ENCODE measurements at regions of chr2 and their contacts with region 1.

Region 1: GRCh38 chr2:197191177-197191939 is 119.2 kb downstream of the ANKRD44 start:
- DNase-seq: peak in 3 of 14 experiments; percentile 83 to 84 (median 84)
- ATAC-seq: peak; percentile 59
- H3K4me3 ChIP-seq: no peak overlapping the region
- H3K4me3 Mint-ChIP-seq: peak overlapping the region; percentile 52
- H3K27ac ChIP-seq: peak overlapping the region; percentile 62 to 64
- H3K27ac Mint-ChIP-seq: peak overlapping the region; percentile 95
- H3K4me1 ChIP-seq: peaks cover 48% of the 10 kb centered on the region
- H3K4me1 Mint-ChIP-seq: peaks cover 82% of the 10 kb centered on the region
- H3K27me3 ChIP-seq: no peaks in the 10 kb centered on the region
- H3K27me3 Mint-ChIP-seq: no peaks in the 10 kb centered on the region
- CTCF ChIP-seq: peak; percentile 84

Region 2: DNA sequence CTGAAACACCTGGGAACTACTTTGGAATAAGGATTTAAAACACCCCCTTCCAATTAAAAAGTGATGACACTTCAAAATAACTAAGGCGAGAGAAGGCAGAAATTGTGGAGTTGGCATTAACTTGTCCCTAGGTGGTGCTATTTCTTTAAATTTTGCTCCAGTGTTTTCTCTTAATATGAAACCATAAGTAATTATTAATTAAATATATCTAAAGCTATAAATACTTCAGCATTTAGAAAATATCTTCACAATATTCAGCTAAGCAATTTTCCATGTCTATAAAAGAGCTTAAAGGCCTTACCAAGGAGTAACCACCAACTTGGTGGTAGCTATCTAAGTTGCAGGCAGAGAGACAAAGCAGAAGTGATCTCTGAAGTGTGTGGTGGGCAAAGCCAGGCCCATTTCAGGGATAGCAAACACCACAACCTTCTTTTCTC is 78.1 kb before region 1 on chr2:
- CTCF ChIA-PET with region 1: interaction called, 19 read pairs
- POLR2A ChIA-PET with region 1: interaction called, 4 read pairs
- intact Hi-C with region 1: loop called (anchors 2 to 5 kb)
- DNase-seq: peak in 3 of 14 experiments; percentile 56 to 70 (median 69)
- ATAC-seq: peak; percentile 60
- H3K4me3 ChIP-seq: no peak overlapping the region
- H3K4me3 Mint-ChIP-seq: no peak overlapping the region
- H3K27ac ChIP-seq: peak overlapping the region in 1 of 2 donors; percentile 38
- H3K27ac Mint-ChIP-seq: peak overlapping the region; percentile 83
- H3K4me1 ChIP-seq: peaks cover 1% of the 10 kb centered on the region
- H3K4me1 Mint-ChIP-seq: peaks cover 36% of the 10 kb centered on the region
- H3K27me3 ChIP-seq: no peaks in the 10 kb centered on the region
- H3K27me3 Mint-ChIP-seq: no peaks in the 10 kb centered on the region
- CTCF ChIP-seq: peak; percentile 81

Region 3: DNA sequence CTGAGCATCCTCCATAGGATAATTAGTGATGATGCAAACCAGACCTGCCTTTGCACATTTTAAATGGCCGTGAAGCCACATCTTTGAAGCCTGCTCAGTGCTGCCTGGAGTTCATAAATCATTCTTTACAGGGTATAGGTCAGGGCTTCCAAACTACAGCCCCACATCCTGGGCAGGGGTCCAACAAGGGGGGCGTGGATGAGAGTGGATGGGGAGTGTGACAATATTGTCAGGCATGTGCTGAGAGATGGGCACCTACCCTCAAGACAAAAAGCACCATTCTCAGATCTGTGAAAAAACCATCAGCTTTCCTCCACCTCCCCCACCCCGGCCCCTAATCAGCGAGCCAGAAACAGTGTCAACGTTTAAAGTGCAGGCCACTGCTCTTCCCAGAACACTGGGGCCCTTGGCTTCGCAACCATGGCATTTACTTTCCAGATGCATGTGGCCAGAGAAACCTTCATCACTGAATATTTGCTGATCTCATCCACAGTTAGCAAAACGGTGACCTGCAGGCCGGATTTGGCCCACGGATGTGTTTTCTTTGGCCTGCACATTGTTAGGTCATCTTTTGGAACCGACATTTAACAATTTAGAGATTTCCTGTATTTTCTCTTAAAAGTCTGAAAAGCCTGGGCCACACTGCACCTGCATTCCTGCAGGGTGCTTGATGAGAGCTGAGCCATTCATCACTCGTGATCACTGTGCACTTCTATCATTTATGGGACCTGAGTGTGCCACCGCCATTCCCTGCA is 11.4 kb before region 1 on chr2:
- CTCF ChIA-PET with region 1: interaction called, 20 read pairs
- POLR2A ChIA-PET with region 1: interaction called, 3 read pairs
- intact Hi-C with region 1: no loop called
- DNase-seq: no peak
- ATAC-seq: no peak
- H3K4me3 ChIP-seq: no peak overlapping the region
- H3K4me3 Mint-ChIP-seq: no peak overlapping the region
- H3K27ac ChIP-seq: no peak overlapping the region
- H3K27ac Mint-ChIP-seq: peak overlapping the region; percentile 46
- H3K4me1 ChIP-seq: peaks cover 12% of the 10 kb centered on the region
- H3K4me1 Mint-ChIP-seq: peaks cover 78% of the 10 kb centered on the region
- H3K27me3 ChIP-seq: no peaks in the 10 kb centered on the region
- H3K27me3 Mint-ChIP-seq: no peaks in the 10 kb centered on the region
- CTCF ChIP-seq: no peak

Region 4: GRCh38 chr2:197209742-197210408 is 18.5 kb after region 1 on chr2:
- CTCF ChIA-PET with region 1: interaction called, 24 read pairs
- POLR2A ChIA-PET with region 1: interaction called, 216 read pairs
- intact Hi-C with region 1: no loop called
- DNase-seq: peak in 7 of 14 experiments; percentile 25 to 79 (median 45)
- ATAC-seq: peak; percentile 8
- H3K4me3 ChIP-seq: peak overlapping the region; percentile 15
- H3K4me3 Mint-ChIP-seq: peak overlapping the region; percentile 73
- H3K27ac ChIP-seq: peak overlapping the region; percentile 79 to 86
- H3K27ac Mint-ChIP-seq: peak overlapping the region; percentile 98
- H3K4me1 ChIP-seq: peaks cover 86% of the 10 kb centered on the region
- H3K4me1 Mint-ChIP-seq: peaks cover 98% of the 10 kb centered on the region
- H3K27me3 ChIP-seq: no peaks in the 10 kb centered on the region
- H3K27me3 Mint-ChIP-seq: no peaks in the 10 kb centered on the region
- CTCF ChIP-seq: no peak

Region 5: GRCh38 chr2:197304556-197305011 is 113.2 kb after region 1 on chr2:
- CTCF ChIA-PET with region 1: interaction called, 69 read pairs
- POLR2A ChIA-PET with region 1: interaction called, 754 read pairs
- intact Hi-C with region 1: no loop called
- DNase-seq: peak in 2 of 14 experiments; percentile 41 to 49
- ATAC-seq: peak; percentile 28
- H3K4me3 ChIP-seq: peak overlapping the region; percentile 94
- H3K4me3 Mint-ChIP-seq: peak overlapping the region; percentile 95
- H3K27ac ChIP-seq: peak overlapping the region; percentile 67 to 96
- H3K27ac Mint-ChIP-seq: peak overlapping the region; percentile 95
- H3K4me1 ChIP-seq: peaks cover 70% of the 10 kb centered on the region
- H3K4me1 Mint-ChIP-seq: peaks cover 89% of the 10 kb centered on the region
- H3K27me3 ChIP-seq: no peaks in the 10 kb centered on the region
- H3K27me3 Mint-ChIP-seq: no peaks in the 10 kb centered on the region
- CTCF ChIP-seq: no peak

Region 6: GRCh38 chr2:197356136-197356535 is 164.8 kb after region 1 on chr2:
- CTCF ChIA-PET with region 1: no interaction called
- POLR2A ChIA-PET with region 1: interaction called, 4 read pairs
- intact Hi-C with region 1: loop called in 1 of 2 experiments (anchors 5 kb)
- DNase-seq: peak in 3 of 14 experiments; percentile 25 to 54 (median 47)
- ATAC-seq: peak; percentile 78
- H3K4me3 ChIP-seq: no peak overlapping the region
- H3K4me3 Mint-ChIP-seq: no peak overlapping the region
- H3K27ac ChIP-seq: no peak overlapping the region
- H3K27ac Mint-ChIP-seq: no peak overlapping the region
- H3K4me1 ChIP-seq: no peaks in the 10 kb centered on the region
- H3K4me1 Mint-ChIP-seq: peaks cover 27% of the 10 kb centered on the region
- H3K27me3 ChIP-seq: no peaks in the 10 kb centered on the region
- H3K27me3 Mint-ChIP-seq: no peaks in the 10 kb centered on the region
- CTCF ChIP-seq: peak; percentile 56

Region 7: GRCh38 chr2:197378494-197379307 is 187.3 kb after region 1 on chr2:
- CTCF ChIA-PET with region 1: interaction called, 9 read pairs
- POLR2A ChIA-PET with region 1: interaction called, 3 read pairs
- intact Hi-C with region 1: loop called (anchors 1 to 2 kb)
- DNase-seq: peak; percentile 39 to 80 (median 58)
- ATAC-seq: peak; percentile 71
- H3K4me3 ChIP-seq: no peak overlapping the region
- H3K4me3 Mint-ChIP-seq: no peak overlapping the region
- H3K27ac ChIP-seq: no peak overlapping the region
- H3K27ac Mint-ChIP-seq: no peak overlapping the region
- H3K4me1 ChIP-seq: peaks cover 7% of the 10 kb centered on the region
- H3K4me1 Mint-ChIP-seq: peaks cover 21% of the 10 kb centered on the region
- H3K27me3 ChIP-seq: no peaks in the 10 kb centered on the region
- H3K27me3 Mint-ChIP-seq: no peaks in the 10 kb centered on the region
- CTCF ChIP-seq: peak; percentile 83